ENCODE measurements at regions of chr12 and their contacts with region 1.

Region 1: GRCh38 chr12:27305673-27306456 is 26.8 kb upstream of the BMAL2 start:
- DNase-seq: peak in 2 of 4 experiments; percentile 10 to 34
- ATAC-seq: no peak
- H3K4me3 ChIP-seq: no peak overlapping the region
- H3K27ac ChIP-seq: no peak overlapping the region
- H3K4me1 ChIP-seq: no peaks in the 10 kb centered on the region; a peak in 1 of 5 replicates
- H3K27me3 ChIP-seq: no peaks in the 10 kb centered on the region
- CTCF ChIP-seq: peak in 2 of 3 experiments; percentile 42 to 64; a peak in 3 of 6 replicates
- EP300 ChIP-seq: no peak
- POLR2A ChIP-seq: no peak
- RAD21 ChIP-seq: peak; percentile 62 to 63

Region 2: GRCh38 chr12:27142101-27142721 is 163.7 kb before region 1 on chr12:
- CTCF ChIA-PET with region 1: no interaction called
- POLR2A ChIA-PET with region 1: no interaction called
- in situ Hi-C with region 1: no loop called
- intact Hi-C with region 1: loop called (anchors 10 kb)
- DNase-seq: peak; percentile 54 to 78 (median 61)
- ATAC-seq: peak; percentile 97
- H3K4me3 ChIP-seq: no peak overlapping the region
- H3K27ac ChIP-seq: no peak overlapping the region
- H3K4me1 ChIP-seq: no peaks in the 10 kb centered on the region
- H3K27me3 ChIP-seq: no peaks in the 10 kb centered on the region
- CTCF ChIP-seq: peak; percentile 78 to 83 (median 79)
- EP300 ChIP-seq: no peak
- POLR2A ChIP-seq: no peak
- RAD21 ChIP-seq: peak; percentile 38 to 72

Region 3: DNA sequence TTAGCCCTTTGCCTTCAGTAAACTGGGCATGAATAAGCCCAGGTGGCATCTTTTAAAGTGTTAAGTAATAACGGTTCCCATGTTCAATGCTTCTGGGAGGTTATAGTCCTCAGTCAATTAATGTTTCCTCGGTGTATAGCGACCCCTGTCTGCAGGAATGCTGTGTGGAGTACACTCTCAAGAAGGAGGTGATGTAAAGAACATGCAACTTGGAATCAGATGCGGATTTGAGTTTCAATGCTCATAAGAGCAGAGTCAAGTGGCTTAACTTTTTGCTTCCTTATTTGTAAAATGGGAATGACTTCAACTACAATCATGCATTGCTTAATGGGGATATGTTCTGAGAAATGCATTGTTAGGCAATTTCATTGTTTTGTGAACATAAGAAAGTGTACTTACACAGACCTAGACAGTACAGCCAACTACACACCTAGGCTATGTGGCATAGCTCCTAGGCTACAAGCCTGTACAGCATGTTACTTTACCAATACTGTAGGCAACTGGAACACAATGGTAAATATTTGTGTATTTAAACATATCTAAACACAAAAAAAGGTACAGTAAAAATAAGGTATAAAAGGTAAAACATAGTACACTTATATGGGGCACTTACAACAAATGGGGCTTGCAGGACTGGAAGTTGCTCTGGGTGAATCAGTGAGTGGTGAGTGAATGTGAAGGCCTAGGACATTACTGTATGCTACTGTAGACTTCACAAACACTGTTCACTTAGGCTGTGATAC is 398.0 kb after region 1 on chr12:
- CTCF ChIA-PET with region 1: no interaction called
- POLR2A ChIA-PET with region 1: no interaction called
- in situ Hi-C with region 1: no loop called
- intact Hi-C with region 1: no loop called
- DNase-seq: peak; percentile 47 to 82 (median 58)
- ATAC-seq: peak; percentile 96
- H3K4me3 ChIP-seq: no peak overlapping the region
- H3K27ac ChIP-seq: no peak overlapping the region
- H3K4me1 ChIP-seq: peaks cover 0 to 3% of the 10 kb centered on the region in 2 experiments; a peak in 1 of 5 replicates
- H3K27me3 ChIP-seq: peaks cover 6 to 19% of the 10 kb centered on the region in 2 experiments; a peak in 4 of 5 replicates
- CTCF ChIP-seq: peak; percentile 79 to 91 (median 82)
- EP300 ChIP-seq: peak; percentile 82
- POLR2A ChIP-seq: no peak
- RAD21 ChIP-seq: peak; percentile 78 to 80

Measured in K562 (cell line).